ENCODE measurements at regions of chr19 and their contacts with region 1.

Region 1: DNA sequence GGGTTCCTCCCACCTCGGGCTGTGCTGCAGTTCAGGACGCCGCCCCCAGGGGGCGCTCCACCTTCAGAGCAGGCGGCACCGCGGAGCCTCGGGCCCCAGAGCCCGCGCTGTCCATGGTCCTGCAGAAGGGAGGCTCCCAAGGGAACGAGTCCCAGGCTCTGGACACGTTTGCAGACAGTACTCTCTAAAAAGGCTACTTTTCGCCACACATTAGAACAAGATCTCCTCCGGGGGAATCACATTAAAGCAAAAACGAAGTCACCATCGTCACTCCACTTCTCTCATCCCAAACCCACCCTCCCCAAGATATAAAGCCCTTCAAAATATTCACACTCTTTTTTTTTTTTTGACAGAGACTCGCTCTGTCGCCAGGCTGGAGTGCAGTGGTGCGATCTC is 4.6 kb upstream of the SIGLEC10 start:
- DNase-seq: peak; percentile 91
- H3K4me3 ChIP-seq: no peak overlapping the region; a peak in 1 of 4 replicates
- H3K27ac ChIP-seq: no peak overlapping the region
- H3K4me1 ChIP-seq: no peaks in the 10 kb centered on the region; a peak in 1 of 4 replicates
- H3K27me3 ChIP-seq: peaks cover 24% of the 10 kb centered on the region
- CTCF ChIP-seq: peak; percentile 93
- EP300 ChIP-seq: no peak
- RAD21 ChIP-seq: peak; percentile 62

Region 2: DNA sequence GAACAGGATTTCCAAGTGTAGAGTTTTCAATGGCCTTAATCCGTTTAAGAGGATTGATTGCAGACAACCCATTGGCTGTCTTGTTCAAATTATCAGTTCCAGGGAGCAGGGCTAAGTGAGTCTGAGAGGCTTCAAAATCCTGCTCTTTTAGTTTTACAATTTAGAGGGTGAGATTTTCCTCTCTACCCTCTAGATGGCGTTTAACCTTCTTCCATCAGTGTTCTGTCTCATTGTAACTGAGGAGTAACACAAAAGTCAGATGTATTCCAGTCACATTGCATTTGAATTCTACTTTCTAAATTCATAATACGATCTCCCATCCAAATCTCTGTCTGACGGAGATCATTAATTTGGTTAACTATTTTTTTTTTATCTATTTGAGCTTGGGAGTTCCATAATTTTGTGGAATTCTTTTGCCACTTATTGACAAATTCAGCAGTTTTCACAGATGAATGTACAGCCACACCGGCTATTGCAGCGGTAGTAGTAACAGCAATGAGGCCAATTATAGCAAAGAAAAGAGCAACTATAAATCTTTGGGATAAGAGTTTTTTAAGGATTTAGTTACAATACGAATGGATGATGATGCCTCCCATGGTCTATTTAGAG is 23.9 kb before region 1 on chr19:
- CTCF ChIA-PET with region 1: interaction called, 10 read pairs
- POLR2A ChIA-PET with region 1: no interaction called
- DNase-seq: peak; percentile 55
- H3K4me3 ChIP-seq: no peak overlapping the region; a peak in 1 of 4 replicates
- H3K27ac ChIP-seq: no peak overlapping the region
- H3K4me1 ChIP-seq: peaks cover 8 to 9% of the 10 kb centered on the region in 2 experiments; a peak in 1 of 4 replicates
- H3K27me3 ChIP-seq: no peaks in the 10 kb centered on the region
- CTCF ChIP-seq: peak; percentile 66
- EP300 ChIP-seq: no peak
- RAD21 ChIP-seq: peak; percentile 56

Region 3: GRCh38 chr19:51439021-51439465 is 17.0 kb after region 1 on chr19:
- CTCF ChIA-PET with region 1: interaction called, 37 read pairs
- POLR2A ChIA-PET with region 1: no interaction called
- DNase-seq: no peak
- H3K4me3 ChIP-seq: no peak overlapping the region
- H3K27ac ChIP-seq: no peak overlapping the region
- H3K4me1 ChIP-seq: no peaks in the 10 kb centered on the region
- H3K27me3 ChIP-seq: peaks cover 62% of the 10 kb centered on the region
- CTCF ChIP-seq: peak; percentile 45
- EP300 ChIP-seq: no peak
- RAD21 ChIP-seq: peak; percentile 56